ENCODE measurements at regions of chr19 and their contacts with region 1.

Region 1: DNA sequence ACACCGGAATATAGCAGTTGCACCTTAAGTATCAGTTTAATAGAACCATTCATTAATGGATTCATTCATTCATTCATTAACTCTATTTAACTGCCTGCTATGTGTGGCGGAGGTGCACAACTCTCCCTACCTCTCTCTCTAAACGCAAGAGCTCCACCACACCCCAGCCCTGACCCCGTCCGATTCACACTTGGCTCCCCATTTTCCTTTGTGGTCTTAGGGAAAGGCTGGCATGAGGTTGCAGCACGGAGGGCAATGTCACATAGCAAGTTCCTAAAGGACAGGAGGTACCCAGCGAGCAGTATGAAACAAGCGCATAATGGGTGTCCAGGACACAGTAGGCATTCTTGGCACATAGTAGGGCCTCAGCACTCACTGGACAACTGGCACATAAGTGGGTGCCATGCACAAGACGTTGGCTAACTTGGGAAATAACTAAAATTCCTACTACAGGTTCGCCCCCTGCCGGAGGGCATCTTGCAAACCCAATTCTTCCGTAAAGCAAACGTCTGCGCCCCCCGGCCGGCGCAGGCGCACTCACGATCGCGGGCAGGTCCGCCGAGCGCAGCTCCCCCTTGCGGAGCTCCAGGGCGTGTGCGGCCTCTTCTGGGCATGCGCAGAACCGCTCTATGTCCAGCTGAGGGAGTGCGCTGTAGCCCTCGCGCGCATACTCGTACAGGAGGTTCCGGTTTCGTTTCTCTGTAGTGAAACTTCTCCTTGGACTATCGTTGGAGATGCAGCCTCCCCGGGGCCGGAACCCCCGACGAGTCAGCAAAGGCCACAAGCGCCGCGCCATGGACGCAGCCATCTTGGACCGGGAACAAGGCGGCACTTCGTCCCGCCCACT is at the start of gene SARS2:
- DNase-seq: peak; percentile 62 to 97
- H3K4me3 ChIP-seq: peak within 1 kb of the TSS; percentile 83 to 93
- H3K27ac ChIP-seq: peak within 1 kb of the TSS; percentile 70 to 77
- H3K4me1 ChIP-seq: peaks cover 9 to 14% of the 10 kb centered on the region in 2 donors
- H3K27me3 ChIP-seq: no peaks in the 10 kb centered on the region
- CTCF ChIP-seq: peak; percentile 98 to 99 (median 98)
- total RNA-seq, gene SARS2: 1.4 TPM

Region 2: GRCh38 chr19:38402967-38403861 is 526.9 kb before region 1 on chr19 and contains the start of gene FAM98C:
- intact Hi-C with region 1: loop called (anchors 1 kb)
- DNase-seq: peak; percentile 92 to 99
- H3K4me3 ChIP-seq: peak within 1 kb of the TSS; percentile 93
- H3K27ac ChIP-seq: peak within 1 kb of the TSS; percentile 72 to 73
- H3K4me1 ChIP-seq: peaks cover 0 to 11% of the 10 kb centered on the region in 2 donors
- H3K27me3 ChIP-seq: no peaks in the 10 kb centered on the region
- CTCF ChIP-seq: peak; percentile 95 to 97 (median 96)
- total RNA-seq, gene FAM98C: 11.1 TPM

Region 3: DNA sequence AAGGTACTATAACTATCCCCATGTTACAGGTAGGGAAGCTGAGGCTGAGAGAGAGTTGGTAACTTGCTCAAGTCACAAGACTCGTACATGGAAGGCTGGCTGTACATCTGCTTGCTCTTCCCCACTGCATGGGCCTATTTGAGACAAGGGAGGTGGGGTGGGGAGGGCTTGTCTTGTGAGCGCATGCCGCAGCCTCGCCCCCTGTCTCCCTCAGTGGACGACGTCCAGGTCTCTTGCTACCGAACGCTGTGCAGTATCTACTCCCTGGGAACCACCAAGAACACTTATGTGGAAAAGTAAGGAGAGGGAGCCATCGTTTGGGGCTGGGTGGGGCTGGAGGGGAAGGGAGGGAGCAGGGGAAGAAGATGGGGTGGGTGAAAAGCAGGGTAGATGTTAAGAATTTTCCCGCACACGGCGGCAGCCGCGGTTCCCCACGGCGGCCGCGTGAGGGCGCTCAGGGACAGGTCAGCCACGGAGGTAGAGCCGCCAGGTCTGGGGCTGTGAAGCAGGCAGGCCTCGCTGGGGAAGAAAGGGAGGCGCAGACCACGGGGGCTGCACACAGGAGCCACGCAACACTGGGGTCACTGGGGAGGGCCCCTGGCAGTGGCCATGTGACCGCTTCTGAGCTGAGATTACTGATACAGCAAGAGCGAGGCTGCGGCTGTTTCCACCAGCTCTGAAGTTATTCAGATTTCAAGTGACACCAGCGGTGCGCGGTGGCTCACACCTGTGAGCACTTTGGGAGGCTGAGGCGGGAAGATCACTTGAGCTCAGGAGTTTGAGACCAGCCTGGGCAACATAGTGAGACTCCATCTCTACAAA is 415.1 kb before region 1 on chr19:
- intact Hi-C with region 1: loop called (anchors 10 kb)
- DNase-seq: peak in 1 of 2 donors; percentile 76
- H3K4me3 ChIP-seq: no peak overlapping the region
- H3K27ac ChIP-seq: no peak overlapping the region
- H3K4me1 ChIP-seq: no peaks in the 10 kb centered on the region
- H3K27me3 ChIP-seq: no peaks in the 10 kb centered on the region
- CTCF ChIP-seq: peak; percentile 70 to 90 (median 89)

Region 4: DNA sequence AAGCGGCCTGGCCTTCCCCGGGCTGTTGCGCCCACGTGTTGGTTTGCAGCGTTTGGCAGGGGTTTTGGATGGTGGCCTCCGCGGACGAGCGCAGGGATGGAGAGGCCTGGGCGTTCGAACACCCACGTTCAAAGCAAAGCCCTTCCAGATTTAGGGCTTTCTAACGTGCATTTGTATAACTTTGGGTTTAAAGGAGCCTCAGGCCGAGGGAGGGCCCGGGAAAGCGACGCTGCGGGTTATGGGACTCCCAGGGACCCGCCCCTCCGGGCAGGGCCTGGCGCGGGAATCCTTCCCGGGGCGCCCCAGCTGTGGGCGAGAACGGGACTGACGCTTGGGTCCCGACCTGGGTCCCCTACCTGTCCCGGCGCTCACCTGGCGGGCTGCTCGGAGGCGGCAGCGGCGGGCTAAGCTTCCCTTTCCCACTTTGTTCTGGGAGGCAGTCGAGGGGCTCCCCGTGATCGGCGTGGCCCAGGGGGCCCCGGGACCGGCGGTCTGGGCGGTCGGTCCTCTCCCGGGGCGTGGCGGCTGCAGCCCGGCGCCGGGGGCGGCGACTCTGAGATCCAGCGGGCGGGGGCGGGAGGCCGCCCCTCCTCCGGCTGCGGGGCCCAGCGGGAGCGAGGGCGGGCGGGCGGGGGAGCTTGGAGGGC is 45.2 kb after region 1 on chr19 and contains the start of gene FBXO17:
- intact Hi-C with region 1: loop called (anchors 2 kb)
- DNase-seq: peak in 1 of 2 donors; percentile 75
- H3K4me3 ChIP-seq: peak within 1 kb of the TSS; percentile 75 to 88
- H3K27ac ChIP-seq: peak within 1 kb of the TSS; percentile 91 to 94
- H3K4me1 ChIP-seq: peaks cover 0 to 11% of the 10 kb centered on the region in 2 donors
- H3K27me3 ChIP-seq: no peaks in the 10 kb centered on the region
- CTCF ChIP-seq: no peak
- total RNA-seq, gene FBXO17: 47.4 TPM

Region 5: GRCh38 chr19:39038098-39038497 is 107.9 kb after region 1 on chr19:
- intact Hi-C with region 1: no loop called
- DNase-seq: no peak
- H3K4me3 ChIP-seq: no peak overlapping the region
- H3K27ac ChIP-seq: no peak overlapping the region
- H3K4me1 ChIP-seq: no peaks in the 10 kb centered on the region
- H3K27me3 ChIP-seq: no peaks in the 10 kb centered on the region
- CTCF ChIP-seq: no peak

Region 6: GRCh38 chr19:39114796-39115545 is 184.8 kb after region 1 on chr19:
- intact Hi-C with region 1: no loop called
- DNase-seq: no peak
- H3K4me3 ChIP-seq: no peak overlapping the region
- H3K27ac ChIP-seq: no peak overlapping the region
- H3K4me1 ChIP-seq: no peaks in the 10 kb centered on the region
- H3K27me3 ChIP-seq: no peaks in the 10 kb centered on the region
- CTCF ChIP-seq: no peak

Measured in ascending aorta (tissue), 2 donors.